Naive thymus-derived CD4-positive, alpha-beta T cell (primary cell): ENCODE measurements at regions of chr17 and their contacts with region 1.

Region 1: GRCh38 chr17:38982858-38983746 is 15.9 kb upstream of the FBXO47 start:
- DNase-seq: peak in 7 of 9 donors; percentile 40 to 76 (median 62)
- ATAC-seq: peak; percentile 70
- H3K4me3 ChIP-seq: no peak overlapping the region
- H3K4me3 Mint-ChIP-seq: no peak overlapping the region
- H3K27ac ChIP-seq: no peak overlapping the region
- H3K27ac Mint-ChIP-seq: peak overlapping the region in 1 of 9 donors; percentile 32
- H3K4me1 ChIP-seq: peaks cover 0 to 6% of the 10 kb centered on the region in 2 donors
- H3K4me1 Mint-ChIP-seq: peaks cover 0 to 6% (median 5%) of the 10 kb centered on the region in 7 donors
- H3K27me3 ChIP-seq: no peaks in the 10 kb centered on the region
- H3K27me3 Mint-ChIP-seq: peaks cover 0 to 12% (median 0%) of the 10 kb centered on the region in 5 donors

Region 2: DNA sequence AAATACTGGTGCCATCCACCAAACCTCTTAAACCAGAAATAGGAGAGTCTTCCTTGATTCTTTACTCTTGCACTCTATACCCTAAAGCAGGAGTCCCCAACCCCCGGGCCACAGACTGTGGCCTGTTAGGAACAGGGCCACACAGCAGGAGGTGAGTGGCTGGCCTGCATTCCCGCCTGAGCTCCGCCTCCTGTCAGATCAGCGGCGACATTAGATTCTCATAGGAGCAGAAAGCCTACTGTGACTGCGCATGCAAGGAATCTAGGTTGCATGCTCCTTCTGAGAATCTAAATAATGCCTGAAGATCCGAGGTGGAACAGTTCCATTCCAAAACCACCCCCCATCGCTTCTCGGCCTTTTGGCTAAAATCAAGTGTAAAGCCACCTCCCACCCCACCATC is 347.0 kb before region 1 on chr17:
- CTCF ChIA-PET with region 1: no interaction called
- POLR2A ChIA-PET with region 1: no interaction called
- intact Hi-C with region 1: no loop called
- DNase-seq: no peak
- ATAC-seq: no peak
- H3K4me3 ChIP-seq: no peak overlapping the region
- H3K4me3 Mint-ChIP-seq: no peak overlapping the region
- H3K27ac ChIP-seq: no peak overlapping the region
- H3K27ac Mint-ChIP-seq: no peak overlapping the region
- H3K4me1 ChIP-seq: no peaks in the 10 kb centered on the region
- H3K4me1 Mint-ChIP-seq: no peaks in the 10 kb centered on the region
- H3K27me3 ChIP-seq: peaks cover 0 to 4% of the 10 kb centered on the region in 2 donors
- H3K27me3 Mint-ChIP-seq: peaks cover 18 to 35% (median 29%) of the 10 kb centered on the region in 5 donors

Region 3: DNA sequence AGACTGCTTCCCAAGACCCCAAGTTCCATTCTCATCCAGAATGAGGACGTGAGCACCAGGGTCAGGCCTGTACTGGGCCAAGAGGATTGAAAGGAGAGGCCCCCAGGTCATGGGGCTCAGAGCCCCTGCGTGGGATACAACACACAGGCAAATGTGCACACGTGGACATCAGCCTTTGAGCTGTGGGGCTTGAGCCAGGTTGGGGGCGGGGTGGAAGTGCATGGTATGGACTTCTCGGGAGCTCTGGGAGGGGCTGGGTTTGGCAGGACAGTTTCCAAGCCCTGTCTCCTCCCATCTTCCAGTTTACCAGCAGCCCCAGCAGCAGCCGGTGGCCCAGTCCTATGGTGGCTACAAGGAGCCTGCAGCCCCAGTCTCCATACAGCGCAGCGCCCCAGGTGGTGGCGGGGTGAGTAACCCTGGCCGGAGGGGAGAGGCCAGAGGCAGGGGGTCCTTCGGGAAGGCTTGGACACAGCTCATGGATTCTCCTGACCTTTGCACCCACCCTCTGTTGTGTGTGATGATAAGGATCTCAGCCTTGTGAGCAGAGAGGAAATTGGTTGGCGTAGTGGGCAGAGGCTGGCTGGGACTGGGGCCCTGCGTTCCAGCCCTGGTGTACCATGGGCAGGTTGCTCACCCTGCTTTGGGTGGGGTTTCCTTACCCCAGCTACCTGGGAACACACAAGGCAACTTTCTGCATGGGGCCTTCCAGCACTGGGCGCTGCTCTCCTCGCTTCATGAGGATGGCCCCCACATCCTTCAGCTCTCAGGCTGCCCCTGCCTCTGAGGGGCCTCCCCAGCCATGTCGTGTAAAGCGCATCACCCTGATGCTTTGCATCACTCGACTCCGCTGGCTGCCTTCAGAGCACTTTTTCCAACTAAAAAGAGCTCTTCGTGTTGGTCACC is 68.1 kb before region 1 on chr17:
- CTCF ChIA-PET with region 1: no interaction called
- POLR2A ChIA-PET with region 1: no interaction called
- intact Hi-C with region 1: no loop called
- DNase-seq: peak in 1 of 9 donors; percentile 16
- ATAC-seq: no peak
- H3K4me3 ChIP-seq: no peak overlapping the region
- H3K4me3 Mint-ChIP-seq: no peak overlapping the region
- H3K27ac ChIP-seq: no peak overlapping the region
- H3K27ac Mint-ChIP-seq: peak overlapping the region in 5 of 9 donors; percentile 39 to 68 (median 49)
- H3K4me1 ChIP-seq: no peaks in the 10 kb centered on the region
- H3K4me1 Mint-ChIP-seq: peaks cover 4 to 22% (median 9%) of the 10 kb centered on the region in 7 donors
- H3K27me3 ChIP-seq: no peaks in the 10 kb centered on the region
- H3K27me3 Mint-ChIP-seq: no peaks in the 10 kb centered on the region

Region 4: GRCh38 chr17:39018267-39019134 is 35.4 kb after region 1 on chr17:
- CTCF ChIA-PET with region 1: interaction called, 10 read pairs
- POLR2A ChIA-PET with region 1: interaction called, 5 read pairs
- intact Hi-C with region 1: loop called in 1 of 2 experiments (anchors 5 kb)
- DNase-seq: peak in 8 of 9 donors; percentile 16 to 30 (median 22)
- ATAC-seq: peak; percentile 22
- H3K4me3 ChIP-seq: peak overlapping the region; percentile 8
- H3K4me3 Mint-ChIP-seq: peak overlapping the region; percentile 21 to 74 (median 62)
- H3K27ac ChIP-seq: peak overlapping the region; percentile 37
- H3K27ac Mint-ChIP-seq: peak overlapping the region; percentile 71 to 97 (median 92)
- H3K4me1 ChIP-seq: peaks cover 0 to 38% of the 10 kb centered on the region in 2 donors
- H3K4me1 Mint-ChIP-seq: peaks cover 23 to 50% (median 40%) of the 10 kb centered on the region in 7 donors
- H3K27me3 ChIP-seq: no peaks in the 10 kb centered on the region
- H3K27me3 Mint-ChIP-seq: no peaks in the 10 kb centered on the region

Region 5: GRCh38 chr17:39069114-39069756 is 86.1 kb after region 1 on chr17:
- CTCF ChIA-PET with region 1: interaction called, 7 read pairs
- POLR2A ChIA-PET with region 1: no interaction called
- intact Hi-C with region 1: loop called in 1 of 2 experiments (anchors 1 kb)
- DNase-seq: peak in 7 of 9 donors; percentile 31 to 65 (median 49)
- ATAC-seq: peak; percentile 86
- H3K4me3 ChIP-seq: no peak overlapping the region
- H3K4me3 Mint-ChIP-seq: no peak overlapping the region
- H3K27ac ChIP-seq: no peak overlapping the region
- H3K27ac Mint-ChIP-seq: peak overlapping the region in 6 of 9 donors; percentile 10 to 88 (median 54)
- H3K4me1 ChIP-seq: no peaks in the 10 kb centered on the region
- H3K4me1 Mint-ChIP-seq: peaks cover 5 to 18% (median 7%) of the 10 kb centered on the region in 7 donors
- H3K27me3 ChIP-seq: no peaks in the 10 kb centered on the region
- H3K27me3 Mint-ChIP-seq: no peaks in the 10 kb centered on the region

Region 6: GRCh38 chr17:39144416-39144840 is 161.3 kb after region 1 on chr17:
- CTCF ChIA-PET with region 1: interaction called, 124 read pairs
- POLR2A ChIA-PET with region 1: no interaction called
- intact Hi-C with region 1: no loop called
- DNase-seq: no peak
- ATAC-seq: no peak
- H3K4me3 ChIP-seq: no peak overlapping the region
- H3K4me3 Mint-ChIP-seq: no peak overlapping the region
- H3K27ac ChIP-seq: no peak overlapping the region
- H3K27ac Mint-ChIP-seq: peak overlapping the region in 7 of 9 donors; percentile 0 to 70 (median 43)
- H3K4me1 ChIP-seq: peaks cover 0 to 5% of the 10 kb centered on the region in 2 donors
- H3K4me1 Mint-ChIP-seq: peaks cover 0 to 40% (median 26%) of the 10 kb centered on the region in 7 donors
- H3K27me3 ChIP-seq: no peaks in the 10 kb centered on the region
- H3K27me3 Mint-ChIP-seq: peaks cover 0 to 12% (median 0%) of the 10 kb centered on the region in 5 donors

Region 7: GRCh38 chr17:39235555-39236449 is 252.7 kb after region 1 on chr17:
- CTCF ChIA-PET with region 1: interaction called, 7 read pairs
- POLR2A ChIA-PET with region 1: no interaction called
- intact Hi-C with region 1: loop called in 1 of 2 experiments (anchors 1 kb)
- DNase-seq: peak in 7 of 9 donors; percentile 35 to 62 (median 51)
- ATAC-seq: peak; percentile 57
- H3K4me3 ChIP-seq: no peak overlapping the region
- H3K4me3 Mint-ChIP-seq: peak overlapping the region in 4 of 10 donors; percentile 0 to 51 (median 8)
- H3K27ac ChIP-seq: no peak overlapping the region
- H3K27ac Mint-ChIP-seq: peak overlapping the region in 8 of 9 donors; percentile 21 to 89 (median 76)
- H3K4me1 ChIP-seq: peaks cover 33 to 43% of the 10 kb centered on the region in 2 donors
- H3K4me1 Mint-ChIP-seq: peaks cover 20 to 45% (median 40%) of the 10 kb centered on the region in 7 donors
- H3K27me3 ChIP-seq: no peaks in the 10 kb centered on the region
- H3K27me3 Mint-ChIP-seq: peaks cover 0 to 13% (median 9%) of the 10 kb centered on the region in 5 donors